Psoas muscle (tissue), 8 donors: ENCODE measurements at regions of chr13 and their contacts with region 1.

Region 1: DNA sequence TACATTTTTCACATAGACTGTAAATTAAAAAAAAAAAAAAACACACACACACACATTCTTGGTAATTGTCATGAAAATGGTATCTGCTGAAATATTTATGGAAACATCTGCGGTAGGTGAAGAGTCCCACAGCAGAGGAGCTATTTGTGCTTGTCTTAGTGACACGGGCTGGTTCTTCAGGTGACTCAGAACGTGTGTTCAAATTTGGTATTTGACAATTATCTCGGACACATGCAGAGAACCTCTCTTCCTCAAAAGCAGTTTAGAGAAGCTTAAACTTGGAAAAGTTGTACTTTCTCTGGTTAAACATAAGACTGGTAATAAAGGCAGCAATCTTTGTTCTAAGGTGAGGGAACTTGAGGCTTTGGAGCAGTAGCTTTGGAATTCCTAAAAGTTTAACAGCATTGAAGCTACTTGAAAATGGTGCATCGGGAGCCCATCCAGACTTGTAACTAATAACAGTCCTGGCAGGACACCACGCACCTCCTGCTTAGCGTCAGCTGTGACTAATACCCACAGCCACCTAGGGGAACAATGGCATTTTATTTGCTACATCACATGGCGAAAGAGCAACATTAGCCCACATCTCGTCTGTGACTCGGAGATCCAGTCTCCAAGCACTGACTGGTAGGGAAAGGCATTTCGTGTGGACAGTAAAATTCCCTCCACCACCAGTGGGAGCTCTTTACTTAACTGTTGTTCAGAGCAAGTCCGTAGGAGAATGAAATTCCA is 1505.1 kb upstream of the SLC10A2 start:
- DNase-seq: peak; percentile 28 to 56
- ATAC-seq: peak; percentile 86 to 99 (median 98)
- H3K4me3 ChIP-seq: no peak overlapping the region
- H3K27ac ChIP-seq: peak overlapping the region; percentile 2
- H3K4me1 ChIP-seq: peaks cover 4% of the 10 kb centered on the region
- H3K27me3 ChIP-seq: no peaks in the 10 kb centered on the region
- CTCF ChIP-seq: peak; percentile 65

Region 2: DNA sequence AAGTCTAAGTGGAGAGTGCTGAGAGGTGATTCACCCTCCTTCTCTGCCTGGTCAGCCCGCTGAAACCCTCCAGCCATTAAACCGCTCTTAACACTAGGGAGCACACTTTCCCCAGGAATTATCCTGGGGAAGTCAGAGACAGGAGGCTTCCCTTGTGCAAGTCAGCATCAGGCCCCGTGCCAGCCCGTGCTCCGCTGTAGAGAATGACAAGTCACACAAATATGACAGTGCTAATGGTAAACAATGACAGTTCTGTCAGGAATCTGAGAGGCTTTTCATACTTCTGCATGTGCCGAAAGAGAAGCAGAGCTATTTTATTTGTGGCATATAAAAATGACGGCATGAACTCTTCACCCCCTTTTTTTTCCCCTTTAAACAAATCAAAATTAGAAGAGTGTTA is 688.2 kb before region 1 on chr13:
- intact Hi-C with region 1: loop called in 1 of 2 experiments (anchors 10 kb)
- DNase-seq: peak; percentile 79 to 93
- ATAC-seq: peak; percentile 96 to 100 (median 100)
- H3K4me3 ChIP-seq: peak overlapping the region; percentile 27
- H3K27ac ChIP-seq: peak overlapping the region; percentile 24
- H3K4me1 ChIP-seq: no peaks in the 10 kb centered on the region
- H3K27me3 ChIP-seq: no peaks in the 10 kb centered on the region
- CTCF ChIP-seq: peak; percentile 57

Region 3: DNA sequence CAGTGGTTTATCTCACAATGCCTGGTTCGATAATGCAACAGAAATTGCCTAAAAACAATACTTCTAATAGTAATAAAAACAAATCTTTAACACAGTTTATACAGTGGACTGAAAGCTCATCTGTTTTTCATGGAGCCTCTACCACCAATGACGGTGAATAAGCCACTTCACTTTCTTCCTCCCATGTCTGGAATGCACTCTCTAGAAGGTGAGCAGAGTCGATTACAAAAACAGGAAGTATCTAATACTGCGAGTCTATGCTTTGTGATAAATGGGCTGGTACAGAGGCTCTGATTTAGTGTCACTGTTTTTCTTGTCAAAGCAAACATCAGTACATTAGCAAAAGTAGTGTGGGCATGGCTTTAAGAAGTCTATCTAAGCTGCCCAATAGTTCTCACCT is 156.6 kb before region 1 on chr13:
- intact Hi-C with region 1: no loop called
- DNase-seq: no peak
- ATAC-seq: no peak
- H3K4me3 ChIP-seq: no peak overlapping the region
- H3K27ac ChIP-seq: no peak overlapping the region
- H3K4me1 ChIP-seq: no peaks in the 10 kb centered on the region
- H3K27me3 ChIP-seq: no peaks in the 10 kb centered on the region
- CTCF ChIP-seq: no peak

Region 4: DNA sequence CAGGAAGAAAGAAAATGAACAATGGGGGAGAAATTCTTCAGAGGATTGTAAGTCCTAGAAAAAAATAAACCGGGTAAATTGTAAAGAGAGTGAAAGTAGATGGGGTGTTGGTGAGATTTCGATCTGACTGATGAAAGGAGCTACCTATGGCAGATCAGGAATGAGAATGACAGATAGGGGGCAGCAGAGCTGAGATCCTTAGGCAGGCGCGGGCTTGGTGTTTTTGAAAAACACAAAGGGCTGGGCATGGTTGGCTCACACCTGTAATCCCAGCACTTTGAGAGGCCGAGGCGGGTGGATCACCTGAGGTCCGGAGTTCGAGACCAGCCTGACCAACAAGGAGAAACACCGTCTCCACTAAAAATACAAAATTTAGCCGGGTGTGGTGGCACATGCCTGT is 36.5 kb before region 1 on chr13:
- intact Hi-C with region 1: no loop called
- DNase-seq: no peak
- ATAC-seq: no peak
- H3K4me3 ChIP-seq: no peak overlapping the region
- H3K27ac ChIP-seq: no peak overlapping the region
- H3K4me1 ChIP-seq: no peaks in the 10 kb centered on the region
- H3K27me3 ChIP-seq: peaks cover 0 to 2% (median 0%) of the 10 kb centered on the region in 3 donors
- CTCF ChIP-seq: no peak